Activated CD8-positive, alpha-beta T cell treated with anti-CD3 and anti-CD28 coated beads for 36 hours (primary cell): ENCODE measurements at regions of chr12 and their contacts with region 1.

Region 1: GRCh38 chr12:106223485-106224354 is 24.1 kb downstream of the CKAP4 start:
- DNase-seq: peak; percentile 75
- ATAC-seq: peak; percentile 81
- H3K4me3 Mint-ChIP-seq: no peak overlapping the region
- H3K27ac Mint-ChIP-seq: no peak overlapping the region
- H3K4me1 Mint-ChIP-seq: peaks cover 17% of the 10 kb centered on the region
- H3K27me3 Mint-ChIP-seq: peaks cover 11% of the 10 kb centered on the region
- CTCF ChIP-seq: peak; percentile 83

Region 2: DNA sequence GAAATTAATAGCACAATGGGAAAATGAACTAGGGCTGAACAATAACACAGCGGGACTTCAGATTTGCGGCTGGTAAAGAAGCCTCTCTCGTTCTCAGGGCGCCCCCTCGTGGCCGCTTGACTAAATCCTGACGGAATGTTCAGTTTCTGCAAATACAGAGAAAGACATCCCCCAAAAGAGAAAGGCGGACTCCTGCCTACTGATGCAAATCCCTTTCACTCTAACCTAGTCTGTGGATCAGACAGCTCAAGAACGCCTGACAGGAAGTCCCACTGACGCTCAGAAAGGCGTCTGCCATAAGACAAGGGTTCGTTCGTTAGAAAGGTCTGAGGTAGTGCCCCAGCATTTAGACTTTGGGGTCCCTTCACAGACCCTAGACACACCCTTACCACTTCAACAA is 87.5 kb before region 1 on chr12:
- CTCF ChIA-PET with region 1: interaction called, 10 read pairs
- POLR2A ChIA-PET with region 1: no interaction called
- intact Hi-C with region 1: no loop called
- DNase-seq: peak; percentile 89
- ATAC-seq: peak; percentile 44
- H3K4me3 Mint-ChIP-seq: no peak overlapping the region
- H3K27ac Mint-ChIP-seq: no peak overlapping the region
- H3K4me1 Mint-ChIP-seq: peaks cover 9% of the 10 kb centered on the region
- H3K27me3 Mint-ChIP-seq: peaks cover 48% of the 10 kb centered on the region
- CTCF ChIP-seq: peak; percentile 81

Region 3: GRCh38 chr12:106247674-106248311 is 24.1 kb after region 1 on chr12 and contains the start of gene CKAP4:
- CTCF ChIA-PET with region 1: interaction called, 13 read pairs
- POLR2A ChIA-PET with region 1: interaction called, 3 read pairs
- intact Hi-C with region 1: no loop called
- DNase-seq: peak; percentile 52
- ATAC-seq: peak; percentile 60
- H3K4me3 Mint-ChIP-seq: peak within 1 kb of the TSS; percentile 71
- H3K27ac Mint-ChIP-seq: peak within 1 kb of the TSS; percentile 85
- H3K4me1 Mint-ChIP-seq: peaks cover 21% of the 10 kb centered on the region
- H3K27me3 Mint-ChIP-seq: no peaks in the 10 kb centered on the region
- CTCF ChIP-seq: no peak
- total RNA-seq, gene CKAP4: 15.2 to 16.3 TPM

Region 4: DNA sequence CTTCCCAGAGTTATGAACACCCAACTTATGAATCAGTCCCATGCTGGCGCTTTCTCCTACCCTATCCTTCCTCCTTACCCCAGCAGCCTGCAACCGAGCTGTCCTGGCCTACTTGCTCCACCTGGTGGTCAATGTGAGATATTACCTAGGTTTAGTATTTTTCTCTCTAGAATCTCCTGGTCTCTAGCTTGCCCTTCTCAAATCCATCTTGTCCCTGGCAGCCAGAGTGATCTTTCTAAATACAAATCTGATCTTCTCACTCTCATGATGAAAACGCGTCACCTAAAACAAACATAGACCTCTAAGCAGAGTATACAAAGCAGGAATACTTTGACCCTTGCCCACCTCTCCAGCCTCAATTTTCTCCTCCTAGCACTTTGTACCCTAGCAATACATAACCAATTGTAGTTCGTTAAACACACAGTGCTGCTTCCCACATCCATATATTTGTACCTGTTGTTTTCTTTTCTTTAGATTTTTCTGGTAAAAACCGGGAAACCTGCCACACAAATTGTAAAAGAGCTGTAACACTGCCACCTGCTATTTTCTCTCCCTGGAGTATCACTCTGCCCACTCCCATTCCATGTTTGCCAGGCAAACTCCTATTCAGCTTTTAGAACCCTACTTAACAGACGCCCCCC is 58.9 kb after region 1 on chr12:
- CTCF ChIA-PET with region 1: interaction called, 82 read pairs
- POLR2A ChIA-PET with region 1: no interaction called
- intact Hi-C with region 1: loop called (anchors 2 kb)
- DNase-seq: peak; percentile 58
- ATAC-seq: peak; percentile 88
- H3K4me3 Mint-ChIP-seq: no peak overlapping the region
- H3K27ac Mint-ChIP-seq: no peak overlapping the region
- H3K4me1 Mint-ChIP-seq: peaks cover 14% of the 10 kb centered on the region
- H3K27me3 Mint-ChIP-seq: peaks cover 13% of the 10 kb centered on the region
- CTCF ChIP-seq: peak; percentile 91

Region 5: GRCh38 chr12:106302401-106303201 is 78.9 kb after region 1 on chr12 and contains the start of gene TCP11L2:
- CTCF ChIA-PET with region 1: interaction called, 12 read pairs
- POLR2A ChIA-PET with region 1: no interaction called
- intact Hi-C with region 1: no loop called
- DNase-seq: peak; percentile 90
- ATAC-seq: peak; percentile 75
- H3K4me3 Mint-ChIP-seq: peak within 1 kb of the TSS; percentile 85
- H3K27ac Mint-ChIP-seq: peak within 1 kb of the TSS; percentile 100
- H3K4me1 Mint-ChIP-seq: peaks cover 56% of the 10 kb centered on the region
- H3K27me3 Mint-ChIP-seq: no peaks in the 10 kb centered on the region
- CTCF ChIP-seq: no peak
- total RNA-seq, gene TCP11L2: 11.9 to 13.2 TPM

Region 6: DNA sequence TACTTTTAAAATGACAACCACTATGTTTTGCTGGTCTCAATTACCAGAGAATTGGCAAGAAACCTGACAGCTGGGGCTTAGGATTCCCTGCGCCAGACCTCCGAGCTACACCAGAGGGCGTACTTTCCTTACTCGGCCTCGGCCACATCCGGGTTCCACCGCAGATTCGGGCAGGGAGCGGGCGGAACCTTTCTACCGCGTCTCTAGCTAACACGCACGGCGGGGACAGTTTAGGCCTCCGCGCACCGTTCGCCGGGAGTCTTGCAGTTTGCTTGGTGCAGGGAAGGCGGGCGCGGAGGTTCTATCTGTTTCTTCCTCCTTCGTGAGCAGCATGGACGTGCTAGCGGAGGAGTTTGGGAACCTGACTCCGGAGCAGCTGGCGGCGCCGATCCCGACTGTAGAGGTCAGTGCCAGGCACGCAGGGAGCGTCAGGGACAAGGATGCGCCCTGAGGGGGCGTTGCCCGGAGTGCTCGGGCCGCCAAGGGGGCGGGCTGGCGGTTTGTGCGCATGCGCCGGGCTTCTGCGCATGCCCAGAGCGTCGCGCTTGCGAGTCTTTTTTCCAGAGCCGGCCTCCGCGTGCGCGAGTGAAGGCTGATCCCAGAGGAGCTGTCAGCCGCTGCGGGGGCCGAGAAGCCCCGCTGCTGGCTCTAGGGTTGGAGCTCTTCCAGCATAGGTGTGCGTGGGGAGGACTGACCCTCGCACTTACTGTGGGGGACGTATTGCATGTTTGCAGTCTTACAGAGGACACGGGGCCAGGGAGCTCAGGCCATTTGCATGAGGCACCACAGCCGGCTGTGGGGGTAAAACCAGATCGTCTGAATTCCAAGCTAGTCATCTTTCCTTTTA is 134.1 kb after region 1 on chr12 and contains the start of gene POLR3B:
- CTCF ChIA-PET with region 1: interaction called, 21 read pairs
- POLR2A ChIA-PET with region 1: no interaction called
- intact Hi-C with region 1: no loop called
- DNase-seq: peak; percentile 98
- ATAC-seq: peak; percentile 95
- H3K4me3 Mint-ChIP-seq: peak within 1 kb of the TSS; percentile 94
- H3K27ac Mint-ChIP-seq: peak within 1 kb of the TSS; percentile 85
- H3K4me1 Mint-ChIP-seq: peaks cover 10% of the 10 kb centered on the region
- H3K27me3 Mint-ChIP-seq: no peaks in the 10 kb centered on the region
- CTCF ChIP-seq: peak; percentile 69
- total RNA-seq, gene POLR3B: 8.3 to 9.5 TPM

Region 7: GRCh38 chr12:106369607-106370346 is 146.1 kb after region 1 on chr12:
- CTCF ChIA-PET with region 1: no interaction called
- POLR2A ChIA-PET with region 1: no interaction called
- intact Hi-C with region 1: no loop called
- DNase-seq: no peak
- ATAC-seq: no peak
- H3K4me3 Mint-ChIP-seq: no peak overlapping the region
- H3K27ac Mint-ChIP-seq: no peak overlapping the region
- H3K4me1 Mint-ChIP-seq: no peaks in the 10 kb centered on the region
- H3K27me3 Mint-ChIP-seq: no peaks in the 10 kb centered on the region
- CTCF ChIP-seq: no peak